Thyroid gland (tissue), 4 donors: ENCODE measurements at regions of chr2 and their contacts with region 1.

Region 1: GRCh38 chr2:210072922-210073509 is 70.6 kb downstream of the RPE start:
- DNase-seq: no peak
- H3K4me3 ChIP-seq: no peak overlapping the region
- H3K27ac ChIP-seq: no peak overlapping the region
- H3K4me1 ChIP-seq: no peaks in the 10 kb centered on the region
- H3K27me3 ChIP-seq: no peaks in the 10 kb centered on the region
- CTCF ChIP-seq: peak in 5 of 6 experiments; percentile 37 to 75 (median 57)
- POLR2A ChIP-seq: no peak

Region 2: DNA sequence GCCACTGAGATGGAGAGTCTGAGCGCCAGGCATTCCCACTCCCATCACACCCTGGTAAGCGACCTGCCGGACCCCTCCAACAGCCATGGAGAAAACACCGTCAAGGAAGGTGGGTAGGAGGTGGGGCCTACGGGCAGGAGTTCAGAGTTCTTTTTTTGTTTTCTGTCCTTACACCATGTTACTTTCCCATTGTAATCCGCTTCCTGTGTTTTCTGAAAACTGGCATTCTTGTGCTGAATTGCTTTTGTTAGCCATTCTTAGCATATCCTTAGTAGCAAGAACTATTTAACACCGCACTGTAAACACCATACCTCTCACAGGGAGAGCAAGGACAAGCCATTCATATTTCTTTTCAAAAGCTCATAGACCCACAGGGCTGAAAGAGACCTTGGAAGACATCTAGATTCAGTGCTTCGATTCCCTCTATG is 255.2 kb before region 1 on chr2:
- intact Hi-C with region 1: no loop called
- DNase-seq: no peak
- H3K4me3 ChIP-seq: no peak overlapping the region
- H3K27ac ChIP-seq: no peak overlapping the region
- H3K4me1 ChIP-seq: no peaks in the 10 kb centered on the region
- H3K27me3 ChIP-seq: no peaks in the 10 kb centered on the region
- CTCF ChIP-seq: no peak
- POLR2A ChIP-seq: no peak

Region 3: DNA sequence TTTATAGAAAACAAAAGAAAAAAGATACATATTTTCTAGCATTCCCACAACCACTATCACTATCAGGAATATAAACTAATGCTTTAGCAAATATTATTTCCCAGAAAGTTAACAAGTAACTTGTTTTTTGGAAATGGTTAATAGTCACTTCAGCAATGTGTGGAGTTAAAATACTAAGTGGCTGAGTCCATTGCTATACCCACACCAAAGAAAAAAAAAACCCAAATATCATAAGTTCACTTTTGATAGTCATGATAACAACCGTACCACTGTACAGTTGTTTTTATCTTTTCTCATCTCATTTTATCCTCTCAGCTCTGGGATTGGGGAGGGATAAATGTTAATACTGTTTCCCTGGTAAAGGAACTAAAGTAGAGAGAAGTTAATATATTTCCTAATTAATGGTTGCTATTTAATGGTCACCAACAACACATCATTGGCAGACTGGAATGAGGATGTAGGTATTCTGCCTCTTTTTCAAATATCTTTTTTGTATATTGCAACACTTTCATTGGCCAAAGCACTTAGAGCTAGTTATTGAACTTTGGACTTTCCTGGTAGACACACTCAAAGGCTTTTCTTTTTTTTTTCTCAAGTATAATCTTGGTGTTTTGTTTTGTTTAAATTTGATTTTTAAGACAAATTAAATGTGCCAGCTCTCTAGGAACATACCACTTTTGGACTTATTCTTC is 116.6 kb after region 1 on chr2:
- intact Hi-C with region 1: loop called (anchors 5 kb)
- DNase-seq: no peak
- H3K4me3 ChIP-seq: no peak overlapping the region
- H3K27ac ChIP-seq: no peak overlapping the region
- H3K4me1 ChIP-seq: no peaks in the 10 kb centered on the region
- H3K27me3 ChIP-seq: no peaks in the 10 kb centered on the region
- CTCF ChIP-seq: no peak
- POLR2A ChIP-seq: no peak